HEK293 (cell line): ENCODE measurements at regions of chr3 and their contacts with region 1.

Region 1: GRCh38 chr3:157865352-157866000 is 240.7 kb downstream of the SHOX2 start:
- H3K4me3 ChIP-seq: no peak overlapping the region
- H3K27ac ChIP-seq: no peak overlapping the region
- H3K4me1 ChIP-seq: no peaks in the 10 kb centered on the region
- CTCF ChIP-seq: no peak

Region 2: DNA sequence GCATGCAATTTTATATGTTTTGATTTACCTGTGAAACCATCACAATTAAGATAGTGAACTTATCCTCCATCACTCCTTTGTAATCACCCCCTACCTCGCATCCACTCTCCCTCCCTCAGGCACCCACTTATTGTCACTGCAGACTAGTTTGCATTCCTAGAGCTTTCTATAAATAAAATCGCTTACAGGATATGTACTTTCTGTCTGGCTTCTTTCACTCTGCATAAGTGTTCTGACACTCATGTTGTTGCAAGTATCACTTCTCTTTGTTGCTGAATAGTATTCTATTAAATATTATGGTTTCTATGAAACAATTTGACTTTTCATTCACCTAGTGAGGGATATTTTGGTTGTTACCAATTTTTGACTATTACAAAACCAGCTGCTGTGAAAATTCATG is 383.7 kb after region 1 on chr3:
- CTCF ChIA-PET with region 1: no interaction called
- POLR2A ChIA-PET with region 1: no interaction called
- H3K4me3 ChIP-seq: no peak overlapping the region
- H3K27ac ChIP-seq: no peak overlapping the region
- H3K4me1 ChIP-seq: no peaks in the 10 kb centered on the region
- CTCF ChIP-seq: no peak

Region 3: DNA sequence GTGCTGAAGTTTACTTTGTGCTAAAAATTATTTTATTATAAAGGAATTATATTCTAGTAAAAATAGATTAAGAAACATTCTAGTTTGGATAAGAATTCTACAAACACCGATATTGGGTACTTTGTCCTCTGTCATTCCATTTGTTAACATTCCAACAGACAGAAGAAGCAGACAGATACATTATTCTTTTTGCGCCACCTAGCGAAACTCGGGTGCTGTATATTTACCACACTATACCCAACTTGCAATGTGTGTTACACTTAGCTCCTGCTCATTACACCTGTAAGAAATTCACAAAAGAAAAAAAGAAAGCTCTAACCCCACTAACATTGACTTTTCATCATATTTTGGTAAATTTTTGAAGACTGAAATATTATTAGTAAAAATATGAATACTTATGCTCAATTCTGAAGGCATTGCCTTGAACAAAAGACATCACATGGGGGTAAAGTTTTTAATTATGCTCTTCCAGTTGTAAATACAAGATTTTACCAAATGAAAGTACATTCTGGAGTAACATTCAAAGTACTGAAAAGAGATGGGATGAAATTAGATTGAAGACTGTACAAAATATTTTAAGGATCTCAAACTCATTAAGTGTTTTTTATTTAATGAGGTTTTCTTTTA is 569.0 kb after region 1 on chr3:
- CTCF ChIA-PET with region 1: interaction called, 20 read pairs
- POLR2A ChIA-PET with region 1: no interaction called
- H3K4me3 ChIP-seq: no peak overlapping the region
- H3K27ac ChIP-seq: no peak overlapping the region
- H3K4me1 ChIP-seq: no peaks in the 10 kb centered on the region
- CTCF ChIP-seq: 0 out of 2 replicates have a peak, but pooled peaks have one; percentile 21